ENCODE measurements at regions of chr7 and their contacts with region 1.

Region 1: GRCh38 chr7:24979863-24980533 is at the start of gene OSBPL3:
- DNase-seq: peak; percentile 94 to 97 (median 95)
- H3K4me3 ChIP-seq: peak within 1 kb of the TSS; percentile 59 to 72
- H3K4me3 Mint-ChIP-seq: peak within 1 kb of the TSS; percentile 91 to 98 (median 97)
- H3K27ac ChIP-seq: peak within 1 kb of the TSS; percentile 66
- H3K27ac Mint-ChIP-seq: peak within 1 kb of the TSS; percentile 94 to 99 (median 96)
- H3K4me1 ChIP-seq: peaks cover 57% of the 10 kb centered on the region
- H3K4me1 Mint-ChIP-seq: peaks cover 44 to 67% (median 54%) of the 10 kb centered on the region in 4 donors
- H3K27me3 ChIP-seq: no peaks in the 10 kb centered on the region
- H3K27me3 Mint-ChIP-seq: no peaks in the 10 kb centered on the region
- total RNA-seq, gene OSBPL3: 61.2 to 72.7 TPM

Region 2: DNA sequence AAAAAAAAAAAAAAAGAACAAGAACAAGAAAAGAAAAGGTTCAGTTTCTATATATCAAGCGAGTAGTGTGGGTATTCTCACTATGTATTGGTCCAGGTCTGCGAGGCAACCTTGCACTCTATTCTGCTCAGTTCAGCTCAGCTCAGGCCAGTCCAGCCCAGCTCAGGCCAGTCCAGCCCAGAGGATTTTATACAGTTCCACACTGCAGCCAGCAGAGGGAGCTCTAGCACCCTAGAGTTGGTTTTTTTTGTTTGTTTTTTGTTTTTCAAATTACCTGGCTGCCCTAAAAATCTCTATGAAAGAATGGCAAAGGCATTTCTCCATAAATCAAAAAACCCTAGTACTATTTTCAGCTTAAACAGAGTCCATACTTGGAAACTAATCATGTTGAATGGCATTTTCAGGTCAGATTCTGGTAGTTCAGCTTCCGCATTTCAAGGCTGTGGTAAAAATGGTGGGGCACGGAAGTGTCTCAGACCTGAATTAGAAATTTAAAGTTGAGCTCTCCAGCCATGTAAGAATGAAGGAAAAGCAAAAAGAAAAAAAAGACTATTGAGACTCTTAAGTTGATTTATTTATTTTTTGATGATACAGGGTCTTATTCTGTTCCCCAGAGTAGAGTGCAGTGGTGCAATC is 167.6 kb before region 1 on chr7:
- CTCF ChIA-PET with region 1: interaction called, 26 read pairs
- POLR2A ChIA-PET with region 1: interaction called, 9 read pairs
- intact Hi-C with region 1: no loop called
- DNase-seq: peak; percentile 25 to 49 (median 38)
- H3K4me3 ChIP-seq: no peak overlapping the region
- H3K4me3 Mint-ChIP-seq: no peak overlapping the region
- H3K27ac ChIP-seq: no peak overlapping the region
- H3K27ac Mint-ChIP-seq: peak overlapping the region in 2 of 7 donors; percentile 22 to 23
- H3K4me1 ChIP-seq: no peaks in the 10 kb centered on the region
- H3K4me1 Mint-ChIP-seq: peaks cover 0 to 3% (median under 1%) of the 10 kb centered on the region in 4 donors
- H3K27me3 ChIP-seq: no peaks in the 10 kb centered on the region
- H3K27me3 Mint-ChIP-seq: no peaks in the 10 kb centered on the region

Region 3: DNA sequence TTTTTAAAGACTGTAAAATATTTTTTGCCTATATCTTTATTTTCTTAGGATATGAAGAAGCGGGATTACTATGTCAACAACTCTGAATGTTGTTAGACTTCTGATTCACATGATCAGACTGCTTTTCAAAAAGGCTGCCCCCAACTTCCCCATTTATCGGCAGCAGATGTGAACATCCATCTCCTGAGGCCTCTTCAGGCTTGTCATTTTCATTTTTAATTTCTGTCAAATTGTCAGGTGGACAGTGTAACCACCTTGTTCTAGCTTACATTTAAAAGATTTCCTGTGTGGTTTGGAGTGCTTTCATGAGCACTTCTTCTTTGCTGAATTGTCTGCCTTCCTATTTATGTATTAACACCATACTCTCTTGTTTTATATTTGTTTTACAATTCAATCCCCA is 143.9 kb before region 1 on chr7:
- CTCF ChIA-PET with region 1: interaction called, 10 read pairs
- POLR2A ChIA-PET with region 1: interaction called, 7 read pairs
- intact Hi-C with region 1: no loop called
- DNase-seq: peak in 4 of 5 donors; percentile 16 to 25 (median 20)
- H3K4me3 ChIP-seq: no peak overlapping the region
- H3K4me3 Mint-ChIP-seq: peak overlapping the region; percentile 1 to 76 (median 53)
- H3K27ac ChIP-seq: no peak overlapping the region
- H3K27ac Mint-ChIP-seq: peak overlapping the region; percentile 7 to 86 (median 26)
- H3K4me1 ChIP-seq: peaks cover 25% of the 10 kb centered on the region
- H3K4me1 Mint-ChIP-seq: peaks cover 22 to 40% (median 29%) of the 10 kb centered on the region in 4 donors
- H3K27me3 ChIP-seq: no peaks in the 10 kb centered on the region
- H3K27me3 Mint-ChIP-seq: no peaks in the 10 kb centered on the region

Region 4: GRCh38 chr7:24948739-24949138 is 31.3 kb before region 1 on chr7:
- CTCF ChIA-PET with region 1: interaction called, 37 read pairs
- POLR2A ChIA-PET with region 1: interaction called, 12 read pairs
- intact Hi-C with region 1: no loop called
- DNase-seq: no peak
- H3K4me3 ChIP-seq: no peak overlapping the region
- H3K4me3 Mint-ChIP-seq: peak overlapping the region in 5 of 8 donors; percentile 5 to 72 (median 41)
- H3K27ac ChIP-seq: no peak overlapping the region
- H3K27ac Mint-ChIP-seq: peak overlapping the region in 2 of 7 donors; percentile 28 to 38
- H3K4me1 ChIP-seq: peaks cover 53% of the 10 kb centered on the region
- H3K4me1 Mint-ChIP-seq: peaks cover 50 to 93% (median 74%) of the 10 kb centered on the region in 4 donors
- H3K27me3 ChIP-seq: no peaks in the 10 kb centered on the region
- H3K27me3 Mint-ChIP-seq: no peaks in the 10 kb centered on the region

Region 5: DNA sequence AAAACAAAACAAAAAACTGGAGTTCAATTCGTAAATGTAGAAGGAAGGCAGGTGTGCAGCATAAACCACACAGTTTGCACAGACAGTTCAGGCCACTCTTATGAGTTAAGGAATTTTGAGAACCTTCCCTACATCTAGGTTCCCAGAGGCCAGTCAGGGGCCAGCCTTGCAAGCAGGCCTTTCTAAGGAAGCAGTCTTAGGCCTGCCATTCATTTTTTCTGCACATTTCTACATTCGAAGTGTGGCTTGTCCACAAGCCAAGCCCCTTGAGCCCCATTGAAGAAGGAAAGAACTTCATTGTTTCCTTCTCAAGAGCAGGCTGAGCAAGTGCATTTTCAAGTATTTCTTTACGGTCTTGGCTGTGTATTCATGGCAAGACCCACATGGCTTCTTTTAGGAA is 11.4 kb after region 1 on chr7:
- CTCF ChIA-PET with region 1: interaction called, 12 read pairs
- POLR2A ChIA-PET with region 1: interaction called, 3 read pairs
- intact Hi-C with region 1: no loop called
- DNase-seq: no peak
- H3K4me3 ChIP-seq: no peak overlapping the region
- H3K4me3 Mint-ChIP-seq: no peak overlapping the region
- H3K27ac ChIP-seq: no peak overlapping the region
- H3K27ac Mint-ChIP-seq: no peak overlapping the region
- H3K4me1 ChIP-seq: no peaks in the 10 kb centered on the region
- H3K4me1 Mint-ChIP-seq: no peaks in the 10 kb centered on the region
- H3K27me3 ChIP-seq: no peaks in the 10 kb centered on the region
- H3K27me3 Mint-ChIP-seq: no peaks in the 10 kb centered on the region

Region 6: DNA sequence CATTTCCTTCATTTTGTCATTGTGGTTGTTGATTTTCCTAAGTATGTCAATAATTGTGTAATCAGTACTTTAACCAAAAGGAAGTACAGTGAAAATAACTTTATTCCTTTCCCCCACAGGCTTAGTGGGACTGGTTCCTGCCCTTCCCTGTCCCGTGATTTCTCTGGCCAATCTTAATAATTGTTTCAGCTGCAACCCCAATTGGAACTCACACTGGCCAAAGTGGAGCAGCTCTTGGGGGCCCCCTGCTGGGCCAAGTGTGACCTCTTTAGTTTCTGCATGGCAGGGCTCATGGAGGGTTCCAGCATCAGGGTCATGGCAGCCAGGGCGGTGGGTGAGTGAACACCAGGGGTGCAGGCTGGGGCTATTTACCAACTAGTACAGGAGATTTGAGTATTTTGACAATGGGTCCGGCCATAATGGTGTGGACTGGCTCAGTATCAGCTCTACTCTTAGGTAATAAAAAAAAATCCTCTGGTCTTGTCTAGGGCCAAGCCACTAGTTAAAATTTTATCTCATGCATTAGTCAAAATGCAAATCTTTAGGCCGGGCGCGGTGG is 113.3 kb after region 1 on chr7:
- CTCF ChIA-PET with region 1: interaction called, 14 read pairs
- POLR2A ChIA-PET with region 1: interaction called, 5 read pairs
- intact Hi-C with region 1: no loop called
- DNase-seq: peak; percentile 63 to 71 (median 68)
- H3K4me3 ChIP-seq: no peak overlapping the region
- H3K4me3 Mint-ChIP-seq: no peak overlapping the region
- H3K27ac ChIP-seq: no peak overlapping the region
- H3K27ac Mint-ChIP-seq: peak overlapping the region in 2 of 7 donors; percentile 6 to 74
- H3K4me1 ChIP-seq: peaks cover 3% of the 10 kb centered on the region
- H3K4me1 Mint-ChIP-seq: peaks cover 6 to 14% (median 8%) of the 10 kb centered on the region in 4 donors
- H3K27me3 ChIP-seq: no peaks in the 10 kb centered on the region
- H3K27me3 Mint-ChIP-seq: peaks cover 0 to 3% of the 10 kb centered on the region in 2 donors